ENCODE measurements at regions of chr15 and their contacts with region 1.

Region 1: GRCh38 chr15:78101463-78102139 is 9.2 kb downstream of the SH2D7 start:
- DNase-seq: no peak
- H3K4me3 Mint-ChIP-seq: no peak overlapping the region
- H3K27ac Mint-ChIP-seq: no peak overlapping the region
- H3K4me1 Mint-ChIP-seq: no peaks in the 10 kb centered on the region
- H3K27me3 Mint-ChIP-seq: no peaks in the 10 kb centered on the region
- CTCF ChIP-seq: no peak

Region 2: DNA sequence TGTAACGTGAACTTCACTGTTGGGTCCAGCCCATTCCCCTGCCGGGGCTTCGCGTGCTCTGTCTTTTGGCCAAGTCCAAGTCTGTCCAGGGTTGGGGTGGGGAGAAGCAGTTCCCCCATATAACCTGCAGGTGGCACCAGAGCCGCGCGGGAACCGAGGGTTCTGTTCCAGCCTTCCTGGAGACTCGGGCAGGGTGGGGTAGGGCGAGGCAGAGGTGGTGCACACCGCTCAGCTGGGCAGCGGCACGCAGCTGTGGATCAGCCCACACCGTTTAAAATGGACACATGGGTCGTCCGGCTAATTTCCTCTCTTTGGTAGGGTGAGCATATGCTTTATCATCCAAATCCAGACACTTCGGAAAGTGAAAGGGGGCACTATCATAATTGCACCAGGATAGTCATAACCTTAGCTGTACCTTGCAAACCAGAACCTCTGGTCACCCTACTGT is 142.1 kb before region 1 on chr15:
- CTCF ChIA-PET with region 1: interaction called, 289 read pairs
- POLR2A ChIA-PET with region 1: no interaction called
- intact Hi-C with region 1: no loop called
- DNase-seq: peak; percentile 77
- H3K4me3 Mint-ChIP-seq: peak overlapping the region; percentile 35
- H3K27ac Mint-ChIP-seq: no peak overlapping the region
- H3K4me1 Mint-ChIP-seq: peaks cover 6% of the 10 kb centered on the region
- H3K27me3 Mint-ChIP-seq: peaks cover 20% of the 10 kb centered on the region
- CTCF ChIP-seq: peak; percentile 94

Region 3: GRCh38 chr15:77966540-77967290 is 134.9 kb before region 1 on chr15:
- CTCF ChIA-PET with region 1: interaction called, 289 read pairs
- POLR2A ChIA-PET with region 1: no interaction called
- intact Hi-C with region 1: no loop called
- DNase-seq: peak; percentile 61
- H3K4me3 Mint-ChIP-seq: no peak overlapping the region
- H3K27ac Mint-ChIP-seq: no peak overlapping the region
- H3K4me1 Mint-ChIP-seq: peaks cover 3% of the 10 kb centered on the region
- H3K27me3 Mint-ChIP-seq: peaks cover 20% of the 10 kb centered on the region
- CTCF ChIP-seq: peak; percentile 91

Region 4: DNA sequence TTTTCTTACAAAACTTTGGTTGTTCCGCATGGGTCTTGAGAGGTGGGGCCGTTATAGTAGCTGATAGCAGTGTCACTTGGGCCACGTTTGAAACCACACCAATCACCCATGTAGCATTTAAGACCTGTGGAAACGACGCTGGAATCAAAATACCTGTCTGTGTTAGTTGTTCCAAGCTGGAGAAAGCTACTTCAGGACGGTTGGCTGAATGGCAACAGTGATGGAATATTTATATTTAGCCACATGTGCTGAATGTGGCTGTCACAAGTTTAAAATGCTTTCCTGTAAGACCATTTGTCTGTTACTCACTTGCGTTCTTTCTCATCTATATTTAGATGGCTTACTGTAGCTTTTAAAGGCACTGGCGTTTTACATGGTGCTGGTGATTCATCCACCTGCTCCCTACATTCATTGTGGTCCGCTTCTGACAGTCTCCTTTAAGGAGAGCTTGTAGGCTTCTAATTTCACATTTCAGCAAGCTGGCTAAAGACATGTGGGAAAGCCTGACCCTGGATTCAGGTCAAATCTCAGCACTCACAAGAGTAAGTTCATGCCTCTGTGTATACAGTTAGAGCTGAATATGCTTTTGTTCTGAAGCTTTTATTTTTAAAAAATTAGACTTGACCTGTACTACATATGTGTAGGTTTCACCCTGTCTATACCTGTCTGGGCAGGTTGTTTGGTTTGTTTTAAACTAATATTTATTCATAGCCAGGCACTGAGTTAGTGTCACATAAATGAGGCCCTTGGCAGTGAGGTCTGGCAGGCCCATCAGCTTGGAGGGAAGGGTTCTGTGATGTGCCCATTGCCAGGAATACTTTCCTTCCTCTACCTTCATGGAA is 164.4 kb after region 1 on chr15:
- CTCF ChIA-PET with region 1: no interaction called
- POLR2A ChIA-PET with region 1: no interaction called
- intact Hi-C with region 1: no loop called
- DNase-seq: peak; percentile 55
- H3K4me3 Mint-ChIP-seq: no peak overlapping the region
- H3K27ac Mint-ChIP-seq: peak overlapping the region; percentile 68
- H3K4me1 Mint-ChIP-seq: peaks cover 4% of the 10 kb centered on the region
- H3K27me3 Mint-ChIP-seq: peaks cover 6% of the 10 kb centered on the region
- CTCF ChIP-seq: no peak